ENCODE measurements at regions of chr21 and their contacts with region 1.

Region 1: DNA sequence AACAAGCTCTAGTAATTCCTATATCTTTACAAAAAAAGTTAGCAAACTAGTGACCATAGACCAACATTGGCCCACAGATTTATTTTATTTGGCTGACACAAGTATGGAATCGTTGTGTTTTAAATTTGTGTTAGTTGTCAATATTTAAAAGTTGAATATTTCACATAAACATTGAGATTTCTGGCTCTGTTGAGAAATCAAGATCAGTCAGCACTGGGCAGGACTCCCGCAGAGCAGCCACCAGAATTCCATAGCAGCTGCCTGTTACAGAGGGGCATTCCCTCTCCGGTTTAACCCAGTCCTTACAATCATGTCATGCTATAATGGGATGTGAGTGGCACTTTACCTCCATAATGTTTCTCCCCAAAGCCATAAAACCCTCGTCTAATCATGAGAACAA is 79.2 kb upstream of the NRIP1 start:
- DNase-seq: no peak
- ATAC-seq: no peak

Region 2: GRCh38 chr21:14737922-14738321 is 406.1 kb before region 1 on chr21:
- intact Hi-C with region 1: no loop called
- DNase-seq: no peak
- ATAC-seq: peak; percentile 63

Region 3: DNA sequence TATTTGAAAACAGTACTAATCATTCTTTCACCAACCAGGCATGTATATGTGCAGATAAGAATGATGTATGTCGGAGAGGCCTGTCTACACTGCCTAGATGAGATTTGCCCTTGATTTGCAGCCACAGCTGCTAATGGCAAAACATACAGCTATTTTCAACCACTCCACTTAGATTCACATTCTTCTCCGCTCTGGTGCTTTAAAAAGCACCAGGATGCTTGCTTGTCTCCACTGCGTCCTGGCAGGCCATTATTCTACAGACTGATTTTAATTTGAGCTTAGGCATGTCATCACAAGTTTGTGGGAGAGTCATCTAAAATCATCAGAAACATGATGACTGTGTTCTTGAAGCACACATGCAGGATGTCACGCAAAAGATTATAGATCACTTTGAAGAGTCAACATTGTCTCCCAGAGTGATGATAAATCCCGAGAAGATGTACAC is 39.8 kb after region 1 on chr21:
- intact Hi-C with region 1: loop called (anchors 2 kb)
- DNase-seq: no peak
- ATAC-seq: no peak

Region 4: GRCh38 chr21:15199414-15200364 is 55.7 kb after region 1 on chr21:
- intact Hi-C with region 1: no loop called
- DNase-seq: no peak
- ATAC-seq: peak; percentile 84

Region 5: DNA sequence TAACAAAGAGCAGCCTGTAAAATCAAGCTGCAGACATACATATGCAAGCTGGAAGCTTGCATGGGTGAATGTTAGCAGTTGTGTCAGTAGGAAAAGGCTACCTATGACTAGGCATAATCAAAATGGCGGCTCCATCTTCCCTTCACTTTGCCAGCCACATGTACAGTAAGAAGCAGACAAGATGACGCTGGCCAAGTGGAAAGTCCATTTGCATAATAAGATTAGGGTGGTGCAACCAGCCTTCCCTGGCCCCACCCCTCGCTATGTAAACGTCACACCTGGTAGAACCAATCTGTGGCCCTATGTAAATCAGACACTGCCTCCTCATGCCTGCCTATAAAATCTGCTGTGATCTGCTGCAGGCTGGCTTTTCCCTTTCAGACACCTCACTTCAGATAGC is 413.9 kb after region 1 on chr21:
- intact Hi-C with region 1: no loop called
- DNase-seq: no peak
- ATAC-seq: no peak

Region 6: DNA sequence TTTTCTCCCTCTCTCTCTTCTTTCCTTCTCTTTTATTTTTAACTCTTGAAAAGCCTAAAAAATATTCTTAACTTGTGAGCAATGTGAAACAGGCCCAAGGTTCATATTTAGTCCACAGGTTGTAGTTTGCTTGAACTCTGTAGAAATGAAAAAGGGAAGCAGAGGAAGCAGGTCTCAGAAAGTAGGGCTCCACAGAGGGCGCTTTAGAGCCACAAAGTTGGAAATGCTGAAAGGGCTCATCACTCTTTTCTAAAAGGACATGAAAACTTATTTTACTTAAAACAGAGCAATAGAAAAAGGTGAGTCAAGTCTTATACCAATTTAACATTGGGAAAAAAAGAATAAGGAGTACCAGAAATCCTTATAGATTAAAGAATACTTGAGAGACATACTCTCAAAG is 832.8 kb after region 1 on chr21:
- intact Hi-C with region 1: no loop called
- DNase-seq: no peak
- ATAC-seq: no peak